Activated naive CD4-positive, alpha-beta T cell treated with anti-CD3 and anti-CD28 coated beads for 36 hours (primary cell): ENCODE measurements at regions of chr13 and their contacts with region 1.

Region 1: GRCh38 chr13:40102856-40103255 is 447.4 kb downstream of the COG6 start:
- DNase-seq: peak; percentile 97
- H3K4me3 Mint-ChIP-seq: peak overlapping the region; percentile 66
- H3K27ac Mint-ChIP-seq: peak overlapping the region; percentile 97
- H3K4me1 Mint-ChIP-seq: peaks cover 37% of the 10 kb centered on the region
- H3K27me3 Mint-ChIP-seq: no peaks in the 10 kb centered on the region

Region 2: DNA sequence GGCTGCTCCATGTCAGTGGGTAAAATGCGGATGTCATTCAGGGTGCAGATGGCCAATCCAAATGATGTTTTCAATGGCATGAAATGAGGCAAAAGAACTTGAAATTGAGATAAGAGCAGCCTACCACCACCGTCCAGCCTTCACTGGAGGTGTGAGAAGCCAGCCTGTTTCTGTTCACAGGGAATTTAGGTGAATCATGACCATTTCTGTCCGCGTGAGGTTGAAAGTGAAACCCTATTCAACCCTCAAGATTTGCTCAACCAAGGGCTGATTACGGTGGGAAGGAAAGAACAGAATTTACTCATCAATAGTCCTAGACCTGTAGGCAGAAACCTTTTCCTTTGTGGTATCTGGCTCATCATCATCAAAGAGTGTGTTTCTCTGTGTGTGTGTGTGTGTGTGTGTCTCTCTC is 76.7 kb before region 1 on chr13:
- CTCF ChIA-PET with region 1: no interaction called
- intact Hi-C with region 1: loop called (anchors 1 kb)
- DNase-seq: peak; percentile 82
- H3K4me3 Mint-ChIP-seq: no peak overlapping the region
- H3K27ac Mint-ChIP-seq: no peak overlapping the region
- H3K4me1 Mint-ChIP-seq: peaks cover 33% of the 10 kb centered on the region
- H3K27me3 Mint-ChIP-seq: peaks cover 2% of the 10 kb centered on the region

Region 3: DNA sequence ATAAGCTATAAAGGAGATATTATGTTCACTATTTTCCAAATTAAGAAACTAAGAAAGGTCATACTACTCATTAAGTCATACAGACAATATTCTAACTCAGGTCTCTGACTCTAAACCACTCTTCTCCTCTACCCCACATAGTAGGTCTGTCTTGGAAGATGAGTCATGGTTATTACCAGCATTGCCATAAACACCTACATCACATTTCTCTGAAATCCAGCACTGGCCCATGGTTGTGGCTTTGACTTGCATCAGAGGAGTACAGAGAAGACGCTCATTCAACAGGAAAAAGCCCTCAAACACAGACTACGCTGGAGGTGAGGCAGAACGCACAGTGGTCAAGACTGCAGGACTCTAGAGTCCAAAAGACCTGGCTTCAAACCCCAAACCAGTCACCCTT is 29.4 kb after region 1 on chr13:
- CTCF ChIA-PET with region 1: no interaction called
- intact Hi-C with region 1: loop called (anchors 1 kb)
- DNase-seq: peak; percentile 87
- H3K4me3 Mint-ChIP-seq: no peak overlapping the region
- H3K27ac Mint-ChIP-seq: peak overlapping the region; percentile 66
- H3K4me1 Mint-ChIP-seq: peaks cover 25% of the 10 kb centered on the region
- H3K27me3 Mint-ChIP-seq: no peaks in the 10 kb centered on the region

Region 4: GRCh38 chr13:40190641-40191100 is 87.8 kb after region 1 on chr13:
- CTCF ChIA-PET with region 1: interaction called, 5 read pairs
- intact Hi-C with region 1: loop called (anchors 1 kb)
- DNase-seq: peak; percentile 91
- H3K4me3 Mint-ChIP-seq: peak overlapping the region; percentile 36
- H3K27ac Mint-ChIP-seq: peak overlapping the region; percentile 81
- H3K4me1 Mint-ChIP-seq: peaks cover 69% of the 10 kb centered on the region
- H3K27me3 Mint-ChIP-seq: no peaks in the 10 kb centered on the region

Region 5: DNA sequence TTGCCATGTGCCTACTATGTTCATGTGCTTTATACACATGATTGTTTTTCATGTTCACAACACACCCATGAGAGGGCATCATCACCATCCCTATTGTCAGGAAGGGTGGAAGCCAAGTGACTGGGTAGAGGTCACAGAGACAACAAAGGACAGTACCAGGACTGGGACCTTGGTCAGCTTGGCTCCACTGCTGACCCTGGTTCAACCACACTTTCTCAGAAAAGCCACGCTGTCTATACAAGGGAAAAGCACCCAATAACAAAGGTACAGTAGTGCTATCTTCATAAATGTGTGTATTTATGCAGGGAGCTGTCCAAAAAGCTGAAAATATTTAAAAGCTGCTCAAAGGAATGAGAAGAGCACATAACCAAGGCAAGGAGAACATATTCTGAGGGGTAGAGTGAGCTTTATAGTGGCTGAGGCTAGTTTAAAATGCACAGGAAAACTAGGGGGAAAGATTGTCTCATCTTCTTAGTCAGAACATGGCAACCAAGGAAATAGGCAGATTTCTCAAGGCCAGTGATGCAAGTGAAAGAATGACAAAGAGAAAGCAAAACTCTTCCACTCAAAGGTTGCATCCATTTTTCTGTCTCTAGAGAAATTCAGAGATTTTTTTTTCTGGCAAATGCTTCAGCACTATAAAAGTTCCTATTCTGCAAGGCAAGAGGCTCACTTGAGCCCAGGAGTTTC is 148.6 kb after region 1 on chr13:
- CTCF ChIA-PET with region 1: interaction called, 3 read pairs
- intact Hi-C with region 1: loop called (anchors 1 kb)
- DNase-seq: peak; percentile 28
- H3K4me3 Mint-ChIP-seq: no peak overlapping the region
- H3K27ac Mint-ChIP-seq: peak overlapping the region; percentile 88
- H3K4me1 Mint-ChIP-seq: peaks cover 52% of the 10 kb centered on the region
- H3K27me3 Mint-ChIP-seq: no peaks in the 10 kb centered on the region

Region 6: GRCh38 chr13:40388617-40389016 is 285.8 kb after region 1 on chr13:
- CTCF ChIA-PET with region 1: no interaction called
- intact Hi-C with region 1: loop called (anchors 2 kb)
- DNase-seq: peak; percentile 94
- H3K4me3 Mint-ChIP-seq: peak overlapping the region; percentile 77
- H3K27ac Mint-ChIP-seq: peak overlapping the region; percentile 92
- H3K4me1 Mint-ChIP-seq: peaks cover 51% of the 10 kb centered on the region
- H3K27me3 Mint-ChIP-seq: no peaks in the 10 kb centered on the region

Region 7: GRCh38 chr13:40982772-40983171 is 879.9 kb after region 1 on chr13:
- CTCF ChIA-PET with region 1: no interaction called
- intact Hi-C with region 1: loop called (anchors 10 kb)
- DNase-seq: peak; percentile 60
- H3K4me3 Mint-ChIP-seq: peak overlapping the region; percentile 90
- H3K27ac Mint-ChIP-seq: peak overlapping the region; percentile 100
- H3K4me1 Mint-ChIP-seq: peaks cover 55% of the 10 kb centered on the region
- H3K27me3 Mint-ChIP-seq: no peaks in the 10 kb centered on the region